CD14-positive monocyte (primary cell): ENCODE measurements at regions of chr17 and their contacts with region 1.

Region 1: GRCh38 chr17:34207572-34207971 is 47.5 kb upstream of the CCL2 start:
- DNase-seq: peak in 2 of 3 donors; percentile 61 to 70
- H3K4me3 ChIP-seq: no peak overlapping the region
- H3K4me3 Mint-ChIP-seq: no peak overlapping the region
- H3K27ac ChIP-seq: no peak overlapping the region
- H3K27ac Mint-ChIP-seq: peak overlapping the region in 1 of 7 donors; percentile 42
- H3K4me1 ChIP-seq: peaks cover 12 to 13% of the 10 kb centered on the region in 2 donors
- H3K4me1 Mint-ChIP-seq: peaks cover 25% of the 10 kb centered on the region
- H3K27me3 ChIP-seq: no peaks in the 10 kb centered on the region
- H3K27me3 Mint-ChIP-seq: no peaks in the 10 kb centered on the region
- CTCF ChIP-seq: no peak

Region 2: DNA sequence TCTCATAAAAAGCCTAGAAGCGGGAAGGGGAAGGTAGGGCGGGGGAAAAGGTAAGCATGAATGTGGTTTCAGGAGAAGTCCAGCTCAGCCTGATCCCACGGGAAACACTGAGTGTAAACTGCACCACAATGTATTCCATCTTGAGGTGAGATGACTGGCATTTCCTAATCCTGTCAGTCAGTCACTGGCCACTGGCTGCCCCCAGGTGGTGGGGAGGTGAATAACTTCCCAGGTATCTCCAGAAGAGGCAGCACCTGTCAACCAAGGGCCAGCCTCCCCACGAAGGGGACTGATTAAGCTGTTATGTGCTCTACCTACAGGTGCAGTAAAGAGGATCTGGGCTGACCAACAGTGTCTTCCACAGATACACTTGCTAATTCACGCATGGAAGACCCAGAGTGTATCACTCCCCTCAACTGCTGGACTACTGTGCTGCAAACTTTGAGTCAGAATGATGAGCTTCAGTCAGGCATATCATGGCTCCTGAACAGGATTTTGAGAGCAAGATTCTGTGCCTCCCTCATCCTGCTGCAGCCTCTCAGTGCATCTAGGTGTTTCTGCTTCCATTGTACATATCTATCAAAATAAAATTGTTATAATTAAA is 61.0 kb before region 1 on chr17:
- intact Hi-C with region 1: no loop called
- DNase-seq: peak in 1 of 3 donors; percentile 9
- H3K4me3 ChIP-seq: no peak overlapping the region
- H3K4me3 Mint-ChIP-seq: no peak overlapping the region
- H3K27ac ChIP-seq: no peak overlapping the region
- H3K27ac Mint-ChIP-seq: no peak overlapping the region
- H3K4me1 ChIP-seq: no peaks in the 10 kb centered on the region
- H3K4me1 Mint-ChIP-seq: no peaks in the 10 kb centered on the region
- H3K27me3 ChIP-seq: peaks cover 0 to 3% of the 10 kb centered on the region in 2 donors
- H3K27me3 Mint-ChIP-seq: peaks cover 2 to 5% (median 3%) of the 10 kb centered on the region in 3 donors
- CTCF ChIP-seq: peak; percentile 40

Region 3: DNA sequence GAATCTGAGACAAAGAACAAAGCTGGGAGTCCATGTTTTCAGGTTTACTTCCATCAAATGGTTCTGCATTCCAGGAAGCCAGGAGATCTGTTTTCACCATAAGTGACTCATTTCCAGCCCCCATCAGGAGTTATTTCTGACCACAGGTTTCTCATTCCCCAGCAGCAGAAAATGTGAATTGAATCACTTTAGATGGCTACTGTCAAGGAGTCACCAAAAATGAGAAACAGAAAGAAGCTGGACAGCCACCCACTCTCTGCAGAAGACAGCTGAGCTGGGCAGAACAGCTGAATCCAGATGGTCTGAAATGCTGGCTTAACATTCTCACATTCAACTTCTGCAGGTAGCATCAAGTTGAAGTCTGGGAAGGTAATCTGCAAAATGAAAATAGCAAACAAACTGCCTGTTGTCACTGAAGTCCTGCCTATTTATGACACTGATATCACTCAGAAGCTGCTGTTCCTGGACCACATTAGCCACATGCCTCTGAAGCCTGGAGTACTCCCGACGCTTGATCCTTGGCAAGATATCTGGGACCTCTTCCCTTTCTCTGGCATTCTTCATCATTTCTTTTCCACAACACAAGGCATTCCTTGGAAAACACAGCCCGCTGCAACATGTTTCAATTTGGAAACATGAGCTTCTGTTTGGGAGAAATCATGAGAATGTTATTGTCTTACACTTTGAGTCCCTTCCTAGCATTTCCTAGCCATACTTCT is 93.2 kb after region 1 on chr17:
- intact Hi-C with region 1: loop called in 1 of 2 experiments (anchors 5 kb)
- DNase-seq: peak in 2 of 3 donors; percentile 33 to 67
- H3K4me3 ChIP-seq: no peak overlapping the region
- H3K4me3 Mint-ChIP-seq: no peak overlapping the region
- H3K27ac ChIP-seq: no peak overlapping the region
- H3K27ac Mint-ChIP-seq: no peak overlapping the region
- H3K4me1 ChIP-seq: peaks cover 34 to 41% of the 10 kb centered on the region in 2 donors
- H3K4me1 Mint-ChIP-seq: peaks cover 53% of the 10 kb centered on the region
- H3K27me3 ChIP-seq: no peaks in the 10 kb centered on the region
- H3K27me3 Mint-ChIP-seq: peaks cover 2 to 3% (median 2%) of the 10 kb centered on the region in 3 donors
- CTCF ChIP-seq: no peak

Region 4: GRCh38 chr17:34314279-34314678 is 106.7 kb after region 1 on chr17:
- intact Hi-C with region 1: no loop called
- DNase-seq: peak; percentile 53 to 80 (median 70)
- H3K4me3 ChIP-seq: peak overlapping the region in 1 of 3 experiments; percentile 48
- H3K4me3 Mint-ChIP-seq: peak overlapping the region in 1 of 2 donors; percentile 43
- H3K27ac ChIP-seq: peak overlapping the region in 1 of 2 donors; percentile 76
- H3K27ac Mint-ChIP-seq: peak overlapping the region; percentile 50 to 92 (median 86)
- H3K4me1 ChIP-seq: peaks cover 40 to 43% of the 10 kb centered on the region in 2 donors
- H3K4me1 Mint-ChIP-seq: peaks cover 47% of the 10 kb centered on the region
- H3K27me3 ChIP-seq: no peaks in the 10 kb centered on the region
- H3K27me3 Mint-ChIP-seq: no peaks in the 10 kb centered on the region
- CTCF ChIP-seq: no peak